Transverse colon (tissue), 4 donors: ENCODE measurements at regions of chr20 and their contacts with region 1.

Region 1: GRCh38 chr20:50987592-50988210 is 29.1 kb downstream of the MOCS3 start:
- DNase-seq: peak; percentile 69
- H3K4me3 ChIP-seq: no peak overlapping the region
- H3K27ac ChIP-seq: no peak overlapping the region
- H3K4me1 ChIP-seq: peaks cover 0 to 3% (median under 1%) of the 10 kb centered on the region in 4 donors
- H3K27me3 ChIP-seq: peaks cover 27% of the 10 kb centered on the region
- CTCF ChIP-seq: peak; percentile 86 to 98 (median 89)
- EP300 ChIP-seq: no peak
- POLR2A ChIP-seq: no peak

Region 2: DNA sequence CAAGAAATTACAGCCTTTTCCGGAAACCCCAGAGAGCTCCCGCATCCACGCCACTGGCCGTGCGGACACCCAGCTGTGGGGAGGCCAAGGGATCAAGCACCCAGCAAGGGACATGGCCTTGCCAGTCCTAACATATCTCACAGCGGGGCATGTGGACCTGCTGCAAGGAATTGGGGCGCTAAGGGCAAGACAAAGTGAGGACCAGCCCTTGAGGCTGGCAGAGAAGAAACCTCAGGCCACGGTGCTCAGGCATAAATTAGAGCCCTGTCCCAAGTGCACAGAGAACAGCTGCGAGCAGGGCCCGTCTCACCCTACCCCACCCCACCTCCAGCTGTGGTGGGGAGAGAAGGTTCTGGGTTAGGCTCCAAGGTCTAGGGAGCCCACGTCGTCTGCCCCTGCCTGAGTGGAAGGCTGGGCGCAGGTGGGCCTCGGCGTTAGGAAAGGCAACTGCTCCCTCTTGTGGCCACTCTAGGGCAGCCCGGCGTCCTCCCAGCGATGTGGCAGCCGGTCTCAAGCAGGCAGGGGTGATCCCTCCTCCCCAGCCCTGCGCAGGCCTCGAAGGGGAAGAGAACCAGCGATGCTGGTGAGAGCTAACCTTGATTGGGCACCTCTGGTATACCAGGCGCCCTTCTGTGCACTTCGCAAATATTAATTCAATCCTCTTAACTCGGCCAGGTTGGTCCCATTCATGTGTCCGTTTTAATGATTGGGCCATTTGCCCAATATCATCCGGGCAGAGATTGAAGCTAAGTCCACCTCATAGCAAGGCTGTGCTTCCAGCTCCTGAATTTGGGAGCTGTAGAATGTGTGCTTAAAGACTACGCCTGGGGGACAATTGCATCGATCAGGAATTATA is 319.0 kb after region 1 on chr20:
- in situ Hi-C with region 1: loop called (anchors 5 to 10 kb)
- intact Hi-C with region 1: loop called (anchors 2 kb)
- DNase-seq: peak; percentile 79
- H3K4me3 ChIP-seq: no peak overlapping the region
- H3K27ac ChIP-seq: no peak overlapping the region
- H3K4me1 ChIP-seq: peaks cover 0 to 7% (median 0%) of the 10 kb centered on the region in 4 donors
- H3K27me3 ChIP-seq: peaks cover 8% of the 10 kb centered on the region
- CTCF ChIP-seq: peak; percentile 87 to 92 (median 89)
- EP300 ChIP-seq: no peak
- POLR2A ChIP-seq: no peak

Region 3: GRCh38 chr20:51326201-51326819 is 338.6 kb after region 1 on chr20:
- in situ Hi-C with region 1: loop called in 1 of 4 experiments (anchors 10 kb)
- intact Hi-C with region 1: no loop called
- DNase-seq: peak; percentile 44
- H3K4me3 ChIP-seq: no peak overlapping the region
- H3K27ac ChIP-seq: no peak overlapping the region
- H3K4me1 ChIP-seq: no peaks in the 10 kb centered on the region
- H3K27me3 ChIP-seq: no peaks in the 10 kb centered on the region
- CTCF ChIP-seq: peak; percentile 52 to 67 (median 61)
- EP300 ChIP-seq: no peak
- POLR2A ChIP-seq: no peak

Region 4: DNA sequence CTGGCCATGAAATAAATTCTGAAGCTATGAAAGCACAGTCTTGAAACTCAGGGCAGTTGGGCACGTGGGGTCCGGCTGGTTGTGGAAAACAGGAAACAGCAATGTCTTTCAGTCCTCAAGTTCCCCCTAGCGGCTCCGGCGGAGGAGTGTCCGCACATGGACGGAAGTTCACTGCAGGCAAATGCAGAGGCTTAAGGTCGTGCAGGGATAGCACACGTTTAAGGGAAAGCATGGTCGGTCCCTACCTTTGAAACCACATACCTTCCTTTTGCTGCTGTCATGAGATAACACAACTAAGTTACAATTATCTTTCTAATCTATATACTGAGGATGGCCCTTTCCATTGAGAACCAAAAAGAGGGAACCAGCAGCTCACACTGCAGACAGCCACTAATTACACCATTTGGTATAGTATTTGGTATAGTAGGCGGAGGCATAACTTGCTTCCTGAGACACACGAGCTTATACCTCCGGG is 607.4 kb after region 1 on chr20:
- in situ Hi-C with region 1: loop called in 3 of 4 experiments (anchors 25 kb)
- intact Hi-C with region 1: no loop called
- DNase-seq: peak; percentile 87
- H3K4me3 ChIP-seq: no peak overlapping the region
- H3K27ac ChIP-seq: peak overlapping the region in 2 of 4 donors; percentile 24 to 41
- H3K4me1 ChIP-seq: peaks cover 0 to 16% (median 3%) of the 10 kb centered on the region in 4 donors
- H3K27me3 ChIP-seq: no peaks in the 10 kb centered on the region
- CTCF ChIP-seq: peak; percentile 76 to 87 (median 81)
- EP300 ChIP-seq: no peak
- POLR2A ChIP-seq: no peak

Region 5: GRCh38 chr20:51624157-51624731 is 636.5 kb after region 1 on chr20:
- in situ Hi-C with region 1: loop called in 2 of 4 experiments (anchors 25 kb)
- intact Hi-C with region 1: no loop called
- DNase-seq: peak; percentile 58
- H3K4me3 ChIP-seq: no peak overlapping the region
- H3K27ac ChIP-seq: no peak overlapping the region
- H3K4me1 ChIP-seq: no peaks in the 10 kb centered on the region
- H3K27me3 ChIP-seq: no peaks in the 10 kb centered on the region
- CTCF ChIP-seq: peak; percentile 43 to 50 (median 48)
- EP300 ChIP-seq: no peak
- POLR2A ChIP-seq: no peak

Region 6: DNA sequence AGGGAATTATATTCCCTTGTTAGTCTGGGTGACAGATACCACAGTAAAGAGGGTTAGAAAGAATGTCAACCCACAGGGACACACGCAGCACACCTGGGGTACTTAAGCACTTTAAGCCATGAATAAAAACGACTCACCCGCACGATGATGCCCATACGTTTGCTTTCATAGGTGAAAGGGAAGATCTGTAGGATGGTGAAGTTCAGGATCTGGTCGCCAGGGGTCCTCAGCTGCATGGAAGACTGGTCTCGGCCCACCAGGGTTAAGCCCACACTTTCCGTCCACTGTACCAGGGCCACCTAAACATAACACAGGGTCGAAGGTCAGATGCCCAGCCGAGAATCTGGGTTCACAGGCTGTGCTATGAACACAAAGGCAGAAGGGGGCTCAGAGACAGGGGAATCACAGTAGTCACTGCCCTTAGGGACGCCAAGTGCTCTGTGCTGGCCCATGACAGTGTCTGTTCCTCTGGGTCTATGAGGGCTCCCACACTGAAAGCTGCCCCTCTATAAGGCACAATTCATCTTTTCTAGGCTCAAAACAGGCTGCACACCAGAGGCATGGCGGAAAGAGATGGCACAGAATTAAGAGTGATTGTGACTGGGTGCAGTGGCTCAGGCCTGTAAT is 651.6 kb after region 1 on chr20:
- in situ Hi-C with region 1: loop called in 1 of 4 experiments (anchors 25 kb)
- intact Hi-C with region 1: no loop called
- DNase-seq: peak; percentile 66
- H3K4me3 ChIP-seq: no peak overlapping the region
- H3K27ac ChIP-seq: no peak overlapping the region
- H3K4me1 ChIP-seq: no peaks in the 10 kb centered on the region
- H3K27me3 ChIP-seq: no peaks in the 10 kb centered on the region
- CTCF ChIP-seq: peak; percentile 65 to 81 (median 78)
- EP300 ChIP-seq: no peak
- POLR2A ChIP-seq: no peak